ENCODE measurements at regions of chr5 and their contacts with region 1.

Region 1: GRCh38 chr5:141849375-141850243 is 28.6 kb downstream of the PCDH1 start:
- DNase-seq: peak; percentile 51 to 86 (median 69)
- ATAC-seq: peak; percentile 77
- H3K4me3 ChIP-seq: peak overlapping the region; percentile 81
- H3K4me3 Mint-ChIP-seq: peak overlapping the region; percentile 90
- H3K27ac ChIP-seq: peak overlapping the region; percentile 64 to 71
- H3K27ac Mint-ChIP-seq: peak overlapping the region; percentile 80
- H3K4me1 ChIP-seq: peaks cover 14% of the 10 kb centered on the region
- H3K4me1 Mint-ChIP-seq: peaks cover 10% of the 10 kb centered on the region
- H3K27me3 ChIP-seq: no peaks in the 10 kb centered on the region
- H3K27me3 Mint-ChIP-seq: no peaks in the 10 kb centered on the region
- CTCF ChIP-seq: no peak

Region 2: DNA sequence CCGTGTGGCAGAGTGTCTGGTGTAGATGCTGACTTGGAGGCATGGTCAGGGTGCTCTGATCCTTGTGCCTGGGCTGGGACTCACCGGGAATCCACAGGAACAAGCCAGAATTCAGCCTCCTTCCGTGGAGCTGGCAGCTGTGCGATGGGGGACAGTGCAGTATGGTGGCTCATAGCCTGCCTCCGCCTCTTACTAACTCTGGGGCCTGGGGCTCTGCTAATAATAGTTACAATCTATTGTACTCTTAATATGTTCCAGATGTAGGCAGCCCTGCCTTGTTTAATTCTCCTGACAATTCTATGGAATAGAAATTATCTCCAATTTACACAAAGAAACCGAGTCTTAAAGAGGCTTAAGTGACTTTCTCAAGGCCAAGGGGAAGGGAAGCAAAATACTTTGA is 49.0 kb before region 1 on chr5:
- CTCF ChIA-PET with region 1: no interaction called
- POLR2A ChIA-PET with region 1: no interaction called
- intact Hi-C with region 1: no loop called
- DNase-seq: no peak
- ATAC-seq: no peak
- H3K4me3 ChIP-seq: no peak overlapping the region
- H3K4me3 Mint-ChIP-seq: no peak overlapping the region
- H3K27ac ChIP-seq: no peak overlapping the region
- H3K27ac Mint-ChIP-seq: no peak overlapping the region
- H3K4me1 ChIP-seq: peaks cover 5% of the 10 kb centered on the region
- H3K4me1 Mint-ChIP-seq: no peaks in the 10 kb centered on the region
- H3K27me3 ChIP-seq: peaks cover 10 to 26% of the 10 kb centered on the region in 2 experiments
- H3K27me3 Mint-ChIP-seq: peaks cover 36% of the 10 kb centered on the region
- CTCF ChIP-seq: no peak

Region 3: GRCh38 chr5:141923448-141924352 is 74.1 kb after region 1 on chr5 and contains the start of gene DELE1:
- CTCF ChIA-PET with region 1: no interaction called
- POLR2A ChIA-PET with region 1: interaction called, 16 read pairs
- intact Hi-C with region 1: loop called (anchors 2 kb)
- DNase-seq: peak; percentile 82 to 95 (median 87)
- ATAC-seq: peak; percentile 94
- H3K4me3 ChIP-seq: peak within 1 kb of the TSS; percentile 75
- H3K4me3 Mint-ChIP-seq: peak within 1 kb of the TSS; percentile 96
- H3K27ac ChIP-seq: peak within 1 kb of the TSS; percentile 94 to 96
- H3K27ac Mint-ChIP-seq: peak within 1 kb of the TSS; percentile 99
- H3K4me1 ChIP-seq: peaks cover 30% of the 10 kb centered on the region
- H3K4me1 Mint-ChIP-seq: peaks cover 45% of the 10 kb centered on the region
- H3K27me3 ChIP-seq: no peaks in the 10 kb centered on the region
- H3K27me3 Mint-ChIP-seq: no peaks in the 10 kb centered on the region
- CTCF ChIP-seq: no peak
- total RNA-seq, gene DELE1: 60.0 to 61.1 TPM

Measured in CD4-positive, alpha-beta T cell (primary cell).